Posterior cingulate gyrus (tissue), 11 donors: ENCODE measurements at regions of chr10 and their contacts with region 1.

Region 1: DNA sequence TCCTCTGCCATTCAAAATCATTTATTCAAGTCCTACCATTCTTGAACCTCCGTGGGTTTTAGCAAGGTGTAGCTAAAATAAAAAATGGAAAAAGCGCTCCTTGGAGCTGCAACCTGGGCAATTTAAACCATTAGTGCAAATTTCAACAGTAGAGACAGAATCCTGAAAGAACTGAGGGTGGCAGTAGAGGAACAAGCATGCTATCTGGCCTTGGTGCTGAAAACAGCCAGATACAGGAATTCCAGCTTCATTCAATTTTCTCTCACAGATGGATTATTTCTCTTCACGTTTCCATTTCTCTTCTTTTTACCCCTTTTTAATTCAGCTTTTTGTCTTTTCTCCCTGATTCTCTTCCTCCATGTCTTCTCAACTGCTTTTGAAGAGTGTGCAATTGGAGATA is 77.7 kb downstream of the OTUD1 start:
- DNase-seq: no peak

Region 2: GRCh38 chr10:24503461-24504320 is 987.2 kb after region 1 on chr10:
- intact Hi-C with region 1: loop called (anchors 10 kb)
- DNase-seq: peak in 2 of 10 donors; percentile 22 to 25